IMR-90 (cell line): ENCODE measurements at regions of chr19 and their contacts with region 1.

Region 1: GRCh38 chr19:11324079-11324661 is 15.3 kb downstream of the RAB3D start:
- DNase-seq: peak; percentile 94
- ATAC-seq: peak; percentile 97
- H3K4me3 ChIP-seq: no peak overlapping the region
- H3K27ac ChIP-seq: peak overlapping the region; percentile 65
- H3K4me1 ChIP-seq: peaks cover 12% of the 10 kb centered on the region
- H3K27me3 ChIP-seq: no peaks in the 10 kb centered on the region
- CTCF ChIP-seq: no peak
- POLR2A ChIP-seq: no peak
- RAD21 ChIP-seq: no peak; the same call in 1 of the 2 replicates

Region 2: GRCh38 chr19:11296264-11296663 is 27.9 kb before region 1 on chr19:
- CTCF ChIA-PET with region 1: no interaction called
- POLR2A ChIA-PET with region 1: no interaction called
- dilution Hi-C with region 1: no loop called
- in situ Hi-C with region 1: no loop called
- intact Hi-C with region 1: no loop called
- DNase-seq: no peak
- ATAC-seq: no peak
- H3K4me3 ChIP-seq: no peak overlapping the region
- H3K27ac ChIP-seq: no peak overlapping the region
- H3K4me1 ChIP-seq: 0 out of 2 replicates have a peak, but pooled peaks cover 1% of the 10 kb centered on the region
- H3K27me3 ChIP-seq: peaks cover 10% of the 10 kb centered on the region; the same call in 1 of the 2 replicates
- CTCF ChIP-seq: no peak
- POLR2A ChIP-seq: no peak
- RAD21 ChIP-seq: no peak

Region 3: GRCh38 chr19:11339254-11340098 is 15.3 kb after region 1 on chr19 and contains the start of gene RAB3D:
- CTCF ChIA-PET with region 1: no interaction called
- POLR2A ChIA-PET with region 1: no interaction called
- dilution Hi-C with region 1: no loop called
- in situ Hi-C with region 1: no loop called
- intact Hi-C with region 1: loop called (anchors 1 kb)
- DNase-seq: peak; percentile 77
- ATAC-seq: peak; percentile 99
- H3K4me3 ChIP-seq: peak within 1 kb of the TSS; percentile 85
- H3K27ac ChIP-seq: peak within 1 kb of the TSS; percentile 60
- H3K4me1 ChIP-seq: peaks cover 8% of the 10 kb centered on the region
- H3K27me3 ChIP-seq: no peaks in the 10 kb centered on the region
- CTCF ChIP-seq: no peak
- POLR2A ChIP-seq: no peak
- RAD21 ChIP-seq: 0 out of 2 replicates have a peak, but pooled peaks have one; percentile 6
- total RNA-seq, gene RAB3D: 4.8 and 5.0 TPM in 2 replicates

Region 4: GRCh38 chr19:11422163-11423021 is 98.2 kb after region 1 on chr19:
- CTCF ChIA-PET with region 1: no interaction called
- POLR2A ChIA-PET with region 1: no interaction called
- dilution Hi-C with region 1: no loop called
- in situ Hi-C with region 1: no loop called
- intact Hi-C with region 1: no loop called
- DNase-seq: no peak
- ATAC-seq: peak; percentile 68
- H3K4me3 ChIP-seq: peak overlapping the region; percentile 12; the same call in 1 of the 2 replicates
- H3K27ac ChIP-seq: no peak overlapping the region
- H3K4me1 ChIP-seq: peaks cover 2% of the 10 kb centered on the region; the same call in 1 of the 2 replicates
- H3K27me3 ChIP-seq: peaks cover 44% of the 10 kb centered on the region
- CTCF ChIP-seq: no peak
- POLR2A ChIP-seq: no peak
- RAD21 ChIP-seq: no peak